B cell (primary cell): ENCODE measurements at regions of chr16 and their contacts with region 1.

Region 1: DNA sequence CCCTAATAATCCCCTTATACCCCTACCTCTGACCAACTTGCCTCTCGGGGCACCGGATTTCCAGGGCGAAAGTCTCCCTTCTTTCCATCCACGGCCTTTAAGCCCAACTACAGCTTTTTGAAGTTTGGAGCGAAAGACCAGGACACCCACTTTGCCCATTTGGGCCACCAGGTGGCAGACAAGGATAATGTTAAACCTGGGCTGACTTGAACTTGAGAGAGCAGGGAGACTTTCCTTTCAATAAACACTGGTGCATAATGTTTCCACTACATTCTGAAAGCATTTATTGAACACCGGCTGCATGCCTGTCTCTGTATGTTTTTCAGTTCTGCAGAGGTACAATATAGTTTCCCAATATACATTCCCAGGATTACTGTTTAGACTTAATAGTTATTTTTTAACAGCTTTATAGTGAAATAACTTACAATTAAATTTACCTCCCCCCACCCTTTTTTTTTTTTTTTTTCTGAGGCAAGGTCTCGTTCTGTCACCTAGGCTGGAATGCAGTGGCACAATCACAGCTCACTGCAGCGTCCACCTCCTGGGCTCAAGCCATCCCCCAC is 6.9 kb upstream of the CES3 start:
- DNase-seq: peak; percentile 77
- ATAC-seq: peak; percentile 82
- H3K4me3 ChIP-seq: no peak overlapping the region
- H3K4me3 Mint-ChIP-seq: no peak overlapping the region
- H3K27ac ChIP-seq: no peak overlapping the region
- H3K27ac Mint-ChIP-seq: no peak overlapping the region
- H3K4me1 ChIP-seq: peaks cover 0 to 4% of the 10 kb centered on the region in 2 donors
- H3K4me1 Mint-ChIP-seq: no peaks in the 10 kb centered on the region
- H3K27me3 ChIP-seq: peaks cover 0 to 22% (median 13%) of the 10 kb centered on the region in 4 experiments
- H3K27me3 Mint-ChIP-seq: peaks cover 52% of the 10 kb centered on the region
- CTCF ChIP-seq: peak; percentile 86

Region 2: DNA sequence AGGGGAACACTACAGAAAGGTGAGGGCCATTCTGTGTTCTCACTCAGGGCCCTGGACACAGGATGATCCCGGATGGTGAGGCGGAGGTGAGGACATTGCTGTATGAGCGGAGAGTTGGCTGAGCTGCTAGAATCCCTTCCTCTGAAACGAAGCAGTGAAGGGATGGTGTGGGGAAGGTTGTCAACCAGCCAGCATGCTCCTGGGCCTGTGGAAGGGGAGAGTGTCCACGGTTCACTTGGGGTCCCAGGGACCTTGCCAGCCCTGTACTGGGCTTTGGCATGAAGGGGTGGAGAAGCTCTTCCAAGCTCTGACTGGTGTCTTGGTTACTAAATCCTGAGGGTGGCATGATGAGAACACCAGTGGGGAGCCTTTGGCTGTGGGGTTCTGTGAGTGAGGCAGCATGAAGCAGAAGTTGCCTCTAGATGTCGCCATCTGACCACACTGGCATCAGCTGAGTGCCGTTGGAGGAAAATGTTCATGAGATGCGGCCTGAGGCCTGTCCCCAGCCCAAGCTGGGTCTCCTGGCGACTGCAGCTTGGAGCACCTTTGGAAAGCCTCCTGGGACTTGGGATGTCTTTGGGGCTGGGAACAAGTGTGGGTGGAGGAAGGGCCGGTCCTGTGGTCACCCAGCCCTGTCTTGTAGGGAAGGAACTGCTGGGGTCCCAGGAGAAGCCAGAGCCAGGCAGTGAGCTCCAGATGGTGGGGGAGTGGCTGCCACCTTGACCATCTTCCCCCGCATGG is 59.1 kb before region 1 on chr16:
- CTCF ChIA-PET with region 1: interaction called, 4 read pairs
- POLR2A ChIA-PET with region 1: no interaction called
- intact Hi-C with region 1: loop called (anchors 1 kb)
- DNase-seq: peak; percentile 63
- ATAC-seq: peak; percentile 54
- H3K4me3 ChIP-seq: no peak overlapping the region
- H3K4me3 Mint-ChIP-seq: no peak overlapping the region
- H3K27ac ChIP-seq: no peak overlapping the region
- H3K27ac Mint-ChIP-seq: no peak overlapping the region
- H3K4me1 ChIP-seq: peaks cover 0 to 3% of the 10 kb centered on the region in 2 donors
- H3K4me1 Mint-ChIP-seq: no peaks in the 10 kb centered on the region
- H3K27me3 ChIP-seq: peaks cover 0 to under 1% (median 0%) of the 10 kb centered on the region in 4 experiments
- H3K27me3 Mint-ChIP-seq: no peaks in the 10 kb centered on the region
- CTCF ChIP-seq: peak; percentile 53